ENCODE measurements at regions of chr20 and their contacts with region 1.

Region 1: GRCh38 chr20:17594443-17594842 is 24.6 kb downstream of the DSTN start:
- DNase-seq: peak; percentile 75
- H3K4me3 ChIP-seq: no peak overlapping the region
- H3K27ac ChIP-seq: peak overlapping the region; percentile 4
- H3K4me1 ChIP-seq: peaks cover 23% of the 10 kb centered on the region
- H3K27me3 ChIP-seq: no peaks in the 10 kb centered on the region
- CTCF ChIP-seq: no peak

Region 2: GRCh38 chr20:17542993-17543412 is 51.4 kb before region 1 on chr20:
- CTCF ChIA-PET with region 1: no interaction called
- dilution Hi-C with region 1: loop called (anchors 5 kb)
- in situ Hi-C with region 1: no loop called
- intact Hi-C with region 1: no loop called
- DNase-seq: peak; percentile 52
- H3K4me3 ChIP-seq: no peak overlapping the region
- H3K27ac ChIP-seq: peak overlapping the region; percentile 32
- H3K4me1 ChIP-seq: peaks cover 18% of the 10 kb centered on the region
- H3K27me3 ChIP-seq: no peaks in the 10 kb centered on the region
- CTCF ChIP-seq: no peak